Naive thymus-derived CD4-positive, alpha-beta T cell (primary cell): ENCODE measurements at regions of chr1 and their contacts with region 1.

Region 1: DNA sequence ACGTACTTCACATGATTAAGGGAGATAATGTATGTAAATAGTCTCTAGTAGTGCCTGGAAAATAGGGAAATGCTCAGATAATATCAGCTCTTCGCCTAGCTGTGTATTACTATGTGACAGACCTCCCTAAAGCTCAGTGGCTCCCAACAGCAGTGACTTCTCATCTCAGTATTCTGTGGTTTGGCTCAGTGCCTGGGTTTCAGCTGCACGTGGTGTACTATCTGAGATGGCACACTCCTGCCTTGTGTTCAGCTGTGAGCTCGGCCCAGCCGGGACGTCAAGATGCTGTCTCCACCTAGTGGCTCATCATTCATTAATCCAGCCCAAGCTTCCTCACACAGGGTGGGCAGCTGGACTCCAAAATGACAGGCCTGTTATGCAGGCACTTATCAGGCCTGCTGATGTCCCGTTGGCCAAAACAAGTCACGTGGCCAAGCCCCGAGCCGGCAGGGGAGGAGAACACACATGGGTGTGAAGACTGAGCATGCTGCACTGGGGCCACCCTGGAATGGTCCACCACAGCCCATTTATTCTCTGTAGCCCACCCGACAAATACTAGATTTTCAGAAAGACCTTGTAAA is 17.8 kb downstream of the SLFNL1 start:
- DNase-seq: peak; percentile 52 to 90 (median 85)
- ATAC-seq: peak; percentile 99
- H3K4me3 ChIP-seq: no peak overlapping the region
- H3K4me3 Mint-ChIP-seq: peak overlapping the region in 7 of 10 donors; percentile 17 to 59 (median 36)
- H3K27ac ChIP-seq: peak overlapping the region; percentile 5
- H3K27ac Mint-ChIP-seq: peak overlapping the region in 8 of 9 donors; percentile 22 to 79 (median 60)
- H3K4me1 ChIP-seq: peaks cover 9 to 12% of the 10 kb centered on the region in 2 donors
- H3K4me1 Mint-ChIP-seq: peaks cover 12 to 26% (median 22%) of the 10 kb centered on the region in 7 donors
- H3K27me3 ChIP-seq: no peaks in the 10 kb centered on the region
- H3K27me3 Mint-ChIP-seq: no peaks in the 10 kb centered on the region

Region 2: DNA sequence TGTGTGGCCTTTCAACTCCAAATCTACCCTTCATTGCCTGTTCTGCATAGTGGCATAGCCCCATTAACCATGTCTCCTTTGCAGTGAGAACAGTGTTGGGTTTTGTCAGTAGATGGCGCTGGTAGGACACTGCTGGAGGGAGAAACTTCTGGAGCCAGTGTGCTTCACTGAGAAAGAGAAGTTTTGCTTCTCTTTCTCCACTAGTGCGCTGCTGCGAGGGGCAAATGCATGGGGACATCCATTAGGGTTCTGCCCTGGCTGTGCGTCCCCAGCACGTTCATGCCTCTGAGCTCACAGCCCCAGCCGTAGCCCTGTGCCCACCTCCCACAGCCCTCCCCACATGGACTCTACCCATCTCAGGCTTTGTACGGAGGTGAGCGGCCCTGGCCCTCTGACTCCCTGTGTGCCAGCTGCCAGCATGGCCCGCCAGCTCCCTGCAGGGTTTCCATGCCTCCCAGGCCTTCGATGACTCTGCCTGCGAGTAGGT is 391.3 kb before region 1 on chr1:
- CTCF ChIA-PET with region 1: no interaction called
- POLR2A ChIA-PET with region 1: no interaction called
- intact Hi-C with region 1: loop called in 1 of 2 experiments (anchors 1 kb)
- DNase-seq: peak in 8 of 9 donors; percentile 45 to 75 (median 68)
- ATAC-seq: peak; percentile 94
- H3K4me3 ChIP-seq: no peak overlapping the region
- H3K4me3 Mint-ChIP-seq: no peak overlapping the region
- H3K27ac ChIP-seq: no peak overlapping the region
- H3K27ac Mint-ChIP-seq: no peak overlapping the region
- H3K4me1 ChIP-seq: no peaks in the 10 kb centered on the region
- H3K4me1 Mint-ChIP-seq: peaks cover 0 to 4% (median 0%) of the 10 kb centered on the region in 7 donors
- H3K27me3 ChIP-seq: no peaks in the 10 kb centered on the region
- H3K27me3 Mint-ChIP-seq: peaks cover 0 to 7% (median 0%) of the 10 kb centered on the region in 5 donors

Region 3: DNA sequence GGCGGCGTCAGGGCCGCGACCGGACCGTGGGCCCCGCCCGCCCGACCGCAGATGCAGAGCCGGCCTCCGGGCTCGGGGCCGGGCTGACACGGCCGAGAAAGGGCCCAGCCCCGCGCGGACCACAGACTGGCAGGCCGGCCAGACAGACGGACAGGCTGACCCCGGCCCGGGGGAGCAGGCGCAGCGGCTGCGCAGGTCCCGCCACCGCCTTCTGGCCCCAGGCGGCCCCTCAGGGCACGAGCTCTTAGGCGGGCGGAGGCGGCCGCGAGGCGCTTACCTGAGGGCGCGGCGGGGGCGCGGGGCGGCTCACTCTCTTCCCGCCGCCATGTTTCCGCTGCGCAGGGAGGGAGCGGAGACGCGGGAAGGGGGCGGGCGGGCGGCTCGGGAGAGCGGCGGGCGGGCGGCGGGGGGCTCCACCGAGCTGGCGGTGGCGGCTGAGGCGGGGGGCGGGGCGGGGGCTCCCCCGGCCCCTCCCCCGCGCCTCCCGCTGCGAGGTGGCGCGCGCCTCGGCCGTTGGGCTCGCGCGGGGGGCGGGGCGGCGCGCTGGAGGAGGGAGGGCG is 238.1 kb after region 1 on chr1 and contains the start of gene SCMH1:
- CTCF ChIA-PET with region 1: no interaction called
- POLR2A ChIA-PET with region 1: no interaction called
- intact Hi-C with region 1: loop called in 1 of 2 experiments (anchors 2 kb)
- DNase-seq: peak; percentile 31 to 67 (median 55)
- ATAC-seq: peak; percentile 77
- H3K4me3 ChIP-seq: peak within 1 kb of the TSS; percentile 57
- H3K4me3 Mint-ChIP-seq: peak within 1 kb of the TSS; percentile 76 to 92 (median 89)
- H3K27ac ChIP-seq: peak within 1 kb of the TSS; percentile 69
- H3K27ac Mint-ChIP-seq: peak within 1 kb of the TSS; percentile 75 to 94 (median 89)
- H3K4me1 ChIP-seq: peaks cover 10 to 13% of the 10 kb centered on the region in 2 donors
- H3K4me1 Mint-ChIP-seq: peaks cover 7 to 35% (median 27%) of the 10 kb centered on the region in 7 donors
- H3K27me3 ChIP-seq: no peaks in the 10 kb centered on the region
- H3K27me3 Mint-ChIP-seq: peaks cover 0 to 5% (median 0%) of the 10 kb centered on the region in 5 donors
- total RNA-seq, gene SCMH1: 16.7 to 18.6 (median 18.2) TPM